ENCODE measurements at regions of chr11 and their contacts with region 1.

Region 1: GRCh38 chr11:115504276-115505158 is at the start of gene CADM1:
- DNase-seq: peak; percentile 93 to 95
- ATAC-seq: peak; percentile 82 to 84
- H3K4me3 ChIP-seq: peak within 1 kb of the TSS; percentile 66 to 75 (median 74)
- H3K27ac ChIP-seq: peak within 1 kb of the TSS; percentile 83 to 87 (median 86)
- H3K4me1 ChIP-seq: peaks cover 6 to 11% of the 10 kb centered on the region in 2 donors
- H3K27me3 ChIP-seq: peaks cover 0 to 8% (median 0%) of the 10 kb centered on the region in 3 donors
- CTCF ChIP-seq: peak; percentile 48 to 70 (median 60)
- POLR2A ChIP-seq: peak; percentile 92 to 96
- total RNA-seq, gene CADM1: 1.2 to 2.5 (median 2.2) TPM

Region 2: GRCh38 chr11:115185507-115185906 is 319.0 kb before region 1 on chr11:
- in situ Hi-C with region 1: no loop called
- intact Hi-C with region 1: loop called (anchors 1 kb)
- DNase-seq: peak; percentile 24 to 46
- ATAC-seq: peak; percentile 98 to 99
- H3K4me3 ChIP-seq: peak overlapping the region; percentile 12 to 27 (median 25)
- H3K27ac ChIP-seq: peak overlapping the region; percentile 73 to 89 (median 77)
- H3K4me1 ChIP-seq: peaks cover 39 to 55% of the 10 kb centered on the region in 2 donors
- H3K27me3 ChIP-seq: no peaks in the 10 kb centered on the region
- CTCF ChIP-seq: no peak
- POLR2A ChIP-seq: peak; percentile 34 to 47

Region 3: DNA sequence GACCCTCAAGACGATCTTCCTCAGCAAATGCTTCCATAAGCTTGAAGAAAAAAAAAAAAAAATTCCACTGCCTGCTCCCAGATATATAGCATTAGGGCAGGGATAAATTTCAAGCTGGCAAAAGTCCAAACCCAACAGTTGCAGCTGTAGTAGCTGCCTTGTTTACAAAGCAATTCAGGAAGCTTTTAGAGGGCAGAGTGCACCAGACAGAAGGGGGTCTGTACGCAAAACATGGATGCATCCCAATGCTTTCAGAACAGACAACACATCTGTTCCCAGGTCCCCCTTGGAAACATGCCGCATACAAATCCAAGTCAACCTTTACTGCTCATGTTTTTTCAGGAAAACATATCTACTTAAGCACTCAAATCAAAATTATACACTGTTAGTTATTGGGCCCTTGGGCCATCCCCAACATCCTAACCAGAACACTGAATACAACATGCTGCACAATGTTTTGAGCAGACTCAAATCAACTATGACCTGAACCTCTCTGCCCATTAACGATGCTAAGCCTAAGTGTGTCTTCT is 94.8 kb before region 1 on chr11:
- in situ Hi-C with region 1: no loop called
- intact Hi-C with region 1: no loop called
- DNase-seq: no peak
- ATAC-seq: no peak
- H3K4me3 ChIP-seq: no peak overlapping the region
- H3K27ac ChIP-seq: no peak overlapping the region
- H3K4me1 ChIP-seq: peaks cover 15 to 24% of the 10 kb centered on the region in 2 donors
- H3K27me3 ChIP-seq: no peaks in the 10 kb centered on the region
- CTCF ChIP-seq: no peak
- POLR2A ChIP-seq: no peak

Region 4: DNA sequence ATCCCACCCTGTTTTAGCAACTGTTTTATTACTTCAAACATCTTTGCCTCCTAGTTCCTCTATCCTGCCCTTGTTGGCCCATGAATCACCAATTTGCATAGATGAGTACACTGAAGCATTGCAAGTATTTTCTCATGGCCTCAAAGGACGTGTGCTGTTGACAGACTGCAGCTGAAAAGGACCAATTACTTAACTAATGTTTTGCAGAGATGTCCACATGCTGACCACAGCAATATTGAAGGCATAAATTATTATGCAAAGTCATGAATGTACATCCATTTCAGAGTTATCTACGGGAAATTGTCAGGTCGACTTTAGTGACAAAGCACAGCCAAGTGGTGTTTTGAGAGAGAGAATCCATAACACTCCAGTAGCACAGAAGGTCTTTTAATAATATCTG is 65.1 kb before region 1 on chr11:
- in situ Hi-C with region 1: no loop called
- intact Hi-C with region 1: no loop called
- DNase-seq: no peak
- ATAC-seq: no peak
- H3K4me3 ChIP-seq: no peak overlapping the region
- H3K27ac ChIP-seq: no peak overlapping the region
- H3K4me1 ChIP-seq: peaks cover under 1 to 6% of the 10 kb centered on the region in 2 donors
- H3K27me3 ChIP-seq: no peaks in the 10 kb centered on the region
- CTCF ChIP-seq: no peak
- POLR2A ChIP-seq: no peak

Region 5: GRCh38 chr11:115530752-115531151 is 26.2 kb after region 1 on chr11:
- in situ Hi-C with region 1: no loop called
- intact Hi-C with region 1: no loop called
- DNase-seq: no peak
- ATAC-seq: no peak
- H3K4me3 ChIP-seq: no peak overlapping the region
- H3K27ac ChIP-seq: no peak overlapping the region
- H3K4me1 ChIP-seq: no peaks in the 10 kb centered on the region
- H3K27me3 ChIP-seq: peaks cover 0 to 3% (median 2%) of the 10 kb centered on the region in 3 donors
- CTCF ChIP-seq: no peak
- POLR2A ChIP-seq: no peak

Region 6: DNA sequence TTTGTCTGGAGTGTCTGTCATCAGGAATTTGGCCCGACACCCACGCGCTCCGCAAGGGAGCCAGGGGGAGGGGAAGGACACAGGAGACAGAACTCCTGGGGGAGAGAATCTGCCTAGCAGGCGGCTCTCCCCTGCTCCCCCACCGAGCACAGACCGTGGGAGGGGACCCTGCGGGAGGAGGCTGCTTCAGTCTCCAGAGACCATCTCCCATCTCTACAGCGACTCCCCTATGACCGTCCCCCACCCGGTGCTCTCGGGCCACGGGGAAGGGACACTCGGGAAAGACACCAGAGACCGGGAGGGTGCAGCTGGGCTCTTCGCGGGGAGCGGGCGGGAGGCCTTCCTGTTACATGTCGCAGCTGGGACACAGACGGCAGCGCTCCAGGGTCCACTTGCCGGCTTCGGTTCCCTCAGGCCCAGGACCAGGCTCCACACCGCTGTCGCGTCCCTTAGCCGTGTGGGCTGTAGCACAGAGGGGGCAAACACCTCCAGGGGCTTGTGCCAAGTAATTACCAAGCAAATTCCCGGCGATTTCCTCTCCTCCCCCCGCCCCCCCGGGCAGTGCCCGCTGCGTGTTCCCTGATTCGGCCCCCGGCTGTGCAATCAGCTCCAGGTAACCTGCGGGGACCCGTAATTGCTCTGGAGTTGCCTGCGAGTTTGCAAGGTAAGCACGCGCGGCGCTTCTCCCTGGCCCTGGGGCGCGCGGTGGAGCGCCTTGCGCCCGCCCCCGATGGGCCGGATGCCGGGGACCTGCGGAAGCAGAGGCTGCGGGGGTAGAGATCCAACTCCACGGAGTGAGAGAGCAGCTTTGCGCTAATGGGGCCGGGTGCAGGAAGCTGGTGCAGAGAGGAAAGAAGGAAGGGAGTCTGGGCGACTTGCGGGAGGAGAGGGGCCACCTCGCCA is 154.8 kb after region 1 on chr11:
- in situ Hi-C with region 1: no loop called
- intact Hi-C with region 1: no loop called
- DNase-seq: no peak
- ATAC-seq: peak; percentile 25 to 31
- H3K4me3 ChIP-seq: peak overlapping the region; percentile 48 to 55 (median 52)
- H3K27ac ChIP-seq: peak overlapping the region in 2 of 4 donors; percentile 36 to 40
- H3K4me1 ChIP-seq: peaks cover 0 to 6% of the 10 kb centered on the region in 2 donors
- H3K27me3 ChIP-seq: peaks cover 8 to 17% (median 11%) of the 10 kb centered on the region in 3 donors
- CTCF ChIP-seq: no peak
- POLR2A ChIP-seq: no peak

Region 7: DNA sequence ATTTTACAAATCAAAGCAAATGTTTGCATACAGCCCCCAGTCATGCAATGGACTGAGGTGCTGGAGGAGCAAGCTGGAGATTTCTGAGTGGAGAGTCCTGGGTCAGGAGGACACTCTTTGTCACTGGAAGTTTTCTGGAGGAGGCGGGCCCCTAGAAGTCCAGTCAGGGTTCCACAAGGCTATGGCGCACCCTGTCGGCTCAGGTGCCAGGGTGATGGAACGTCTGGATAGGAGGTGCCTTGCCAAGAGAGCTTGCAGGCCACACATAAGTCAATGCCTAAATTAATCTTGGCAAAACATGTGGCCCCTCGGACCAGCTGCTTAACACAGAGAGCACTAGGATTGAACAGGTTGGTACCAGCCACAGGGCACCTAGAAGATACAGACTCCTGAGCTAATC is 174.4 kb after region 1 on chr11:
- in situ Hi-C with region 1: no loop called
- intact Hi-C with region 1: loop called (anchors 2 kb)
- DNase-seq: peak in 1 of 2 donors; percentile 18
- ATAC-seq: no peak
- H3K4me3 ChIP-seq: no peak overlapping the region
- H3K27ac ChIP-seq: no peak overlapping the region
- H3K4me1 ChIP-seq: no peaks in the 10 kb centered on the region
- H3K27me3 ChIP-seq: no peaks in the 10 kb centered on the region
- CTCF ChIP-seq: peak in 1 of 5 experiments; percentile 28
- POLR2A ChIP-seq: no peak